ENCODE measurements at regions of chr4 and their contacts with region 1.

Region 1: DNA sequence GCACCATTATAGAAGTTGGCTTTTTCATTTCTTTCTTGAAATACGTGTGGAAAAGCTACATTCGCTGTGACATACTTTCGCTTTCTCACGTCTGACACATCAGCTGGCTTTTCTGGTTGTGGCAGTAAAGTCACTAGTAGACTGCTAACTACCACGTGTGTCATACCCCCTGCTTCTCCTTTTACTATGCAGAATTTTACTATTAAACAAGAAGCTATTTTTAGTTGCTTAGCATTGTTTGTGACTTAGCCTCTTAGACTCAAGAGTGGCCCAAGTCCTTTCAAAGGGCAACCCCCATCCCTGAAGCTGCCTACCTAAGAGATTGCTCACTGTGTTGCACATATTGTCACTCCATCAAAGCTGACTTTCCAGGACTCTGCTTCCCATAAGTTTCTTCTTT is 2.1 kb upstream of the IL2 start:
- DNase-seq: peak in 6 of 9 donors; percentile 19 to 41 (median 34)
- ATAC-seq: peak; percentile 76
- H3K4me3 ChIP-seq: peak overlapping the region; percentile 33
- H3K4me3 Mint-ChIP-seq: peak overlapping the region; percentile 74 to 91 (median 86)
- H3K27ac ChIP-seq: no peak overlapping the region
- H3K27ac Mint-ChIP-seq: peak overlapping the region; percentile 66 to 86 (median 77)
- H3K4me1 ChIP-seq: peaks cover 25 to 46% of the 10 kb centered on the region in 2 donors
- H3K4me1 Mint-ChIP-seq: peaks cover 20 to 55% (median 50%) of the 10 kb centered on the region in 7 donors
- H3K27me3 ChIP-seq: no peaks in the 10 kb centered on the region
- H3K27me3 Mint-ChIP-seq: no peaks in the 10 kb centered on the region

Region 2: GRCh38 chr4:122151982-122152710 is 306.5 kb before region 1 on chr4 and contains the start of gene BLTP1:
- CTCF ChIA-PET with region 1: no interaction called
- POLR2A ChIA-PET with region 1: interaction called, 3 read pairs
- intact Hi-C with region 1: loop called in 1 of 2 experiments (anchors 5 kb)
- DNase-seq: peak; percentile 81 to 92 (median 87)
- ATAC-seq: peak; percentile 95
- H3K4me3 ChIP-seq: peak within 1 kb of the TSS; percentile 96
- H3K4me3 Mint-ChIP-seq: peak within 1 kb of the TSS; percentile 79 to 98 (median 98)
- H3K27ac ChIP-seq: peak within 1 kb of the TSS; percentile 85
- H3K27ac Mint-ChIP-seq: peak within 1 kb of the TSS; percentile 90 to 100 (median 97)
- H3K4me1 ChIP-seq: peaks cover 22 to 28% of the 10 kb centered on the region in 2 donors
- H3K4me1 Mint-ChIP-seq: peaks cover 41 to 84% (median 72%) of the 10 kb centered on the region in 7 donors
- H3K27me3 ChIP-seq: no peaks in the 10 kb centered on the region
- H3K27me3 Mint-ChIP-seq: no peaks in the 10 kb centered on the region
- total RNA-seq, gene BLTP1: 45.9 to 86.6 (median 72.8) TPM

Region 3: DNA sequence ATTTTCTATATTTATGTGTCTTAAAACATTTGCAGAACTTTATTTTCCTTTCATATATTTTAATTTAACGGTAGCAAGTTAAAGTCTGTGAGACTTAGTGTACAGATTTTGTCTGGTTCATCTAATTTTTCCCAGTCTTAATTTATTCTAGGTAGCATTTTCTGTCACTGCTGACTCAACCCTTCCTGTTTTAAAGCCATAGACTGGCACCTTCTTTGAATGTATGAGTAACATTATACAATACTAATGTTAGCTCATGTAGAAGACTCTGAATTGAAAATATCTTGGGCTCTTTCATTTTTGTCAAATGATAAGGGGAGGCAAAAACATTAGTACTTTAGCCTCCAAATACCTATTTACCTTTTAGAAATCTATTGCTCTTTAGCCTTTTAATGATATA is 262.9 kb before region 1 on chr4:
- CTCF ChIA-PET with region 1: no interaction called
- POLR2A ChIA-PET with region 1: no interaction called
- intact Hi-C with region 1: no loop called
- DNase-seq: no peak
- ATAC-seq: no peak
- H3K4me3 ChIP-seq: no peak overlapping the region
- H3K4me3 Mint-ChIP-seq: no peak overlapping the region
- H3K27ac ChIP-seq: no peak overlapping the region
- H3K27ac Mint-ChIP-seq: no peak overlapping the region
- H3K4me1 ChIP-seq: no peaks in the 10 kb centered on the region
- H3K4me1 Mint-ChIP-seq: peaks cover 0 to 2% (median 0%) of the 10 kb centered on the region in 7 donors
- H3K27me3 ChIP-seq: no peaks in the 10 kb centered on the region
- H3K27me3 Mint-ChIP-seq: no peaks in the 10 kb centered on the region

Region 4: GRCh38 chr4:122434285-122434684 is 24.3 kb before region 1 on chr4:
- CTCF ChIA-PET with region 1: no interaction called
- POLR2A ChIA-PET with region 1: no interaction called
- intact Hi-C with region 1: loop called in 1 of 2 experiments (anchors 1 kb)
- DNase-seq: peak in 5 of 9 donors; percentile 34 to 55 (median 48)
- ATAC-seq: peak; percentile 63
- H3K4me3 ChIP-seq: no peak overlapping the region
- H3K4me3 Mint-ChIP-seq: peak overlapping the region in 8 of 10 donors; percentile 13 to 75 (median 56)
- H3K27ac ChIP-seq: no peak overlapping the region
- H3K27ac Mint-ChIP-seq: peak overlapping the region in 2 of 9 donors; percentile 6 to 10
- H3K4me1 ChIP-seq: peaks cover 0 to 10% of the 10 kb centered on the region in 2 donors
- H3K4me1 Mint-ChIP-seq: peaks cover 12 to 44% (median 32%) of the 10 kb centered on the region in 7 donors
- H3K27me3 ChIP-seq: no peaks in the 10 kb centered on the region
- H3K27me3 Mint-ChIP-seq: no peaks in the 10 kb centered on the region

Region 5: DNA sequence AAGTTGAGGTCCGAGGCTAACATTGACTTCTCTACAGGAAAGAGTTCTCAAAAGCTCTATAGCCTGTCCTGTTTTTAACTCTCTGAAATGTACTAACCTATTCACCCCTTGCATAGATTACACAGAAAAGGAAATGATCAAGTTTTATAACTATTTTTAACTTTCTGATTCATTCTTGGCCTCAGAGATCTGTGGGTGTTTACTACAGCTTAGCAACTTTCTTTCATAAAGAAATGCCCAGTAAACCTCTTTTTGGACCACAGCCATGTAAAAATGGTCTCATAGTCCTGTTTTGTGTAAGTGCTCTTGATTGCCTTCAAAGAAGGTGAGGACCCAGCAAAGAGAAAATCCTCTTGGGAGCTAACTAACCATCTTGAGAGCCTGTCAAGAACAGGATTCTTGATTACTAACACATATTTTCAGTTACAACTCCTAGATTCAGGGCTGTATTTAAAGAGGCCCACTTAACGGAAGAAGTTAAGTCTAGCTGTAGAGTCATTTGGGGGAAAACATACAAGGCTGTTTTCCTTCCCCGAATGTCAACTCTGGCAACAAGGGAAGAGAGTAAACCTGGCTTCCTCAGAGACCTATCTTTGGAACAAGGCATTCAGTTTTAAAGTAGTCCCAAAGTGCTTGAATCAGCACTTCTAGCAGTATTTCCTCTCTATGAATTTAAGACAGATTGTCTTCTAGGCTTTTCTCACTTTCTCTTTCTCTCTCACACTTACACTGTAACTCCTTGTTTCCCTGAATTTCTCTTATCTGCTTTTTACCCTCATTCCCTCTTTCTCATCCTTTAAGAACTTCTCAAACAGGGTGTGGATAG is 84.0 kb after region 1 on chr4:
- CTCF ChIA-PET with region 1: no interaction called
- POLR2A ChIA-PET with region 1: no interaction called
- intact Hi-C with region 1: loop called in 1 of 2 experiments (anchors 1 kb)
- DNase-seq: no peak
- ATAC-seq: no peak
- H3K4me3 ChIP-seq: no peak overlapping the region
- H3K4me3 Mint-ChIP-seq: peak overlapping the region in 1 of 10 donors; percentile 67
- H3K27ac ChIP-seq: no peak overlapping the region
- H3K27ac Mint-ChIP-seq: peak overlapping the region in 5 of 9 donors; percentile 4 to 92 (median 64)
- H3K4me1 ChIP-seq: peaks cover 8 to 35% of the 10 kb centered on the region in 2 donors
- H3K4me1 Mint-ChIP-seq: peaks cover 0 to 64% (median 16%) of the 10 kb centered on the region in 7 donors
- H3K27me3 ChIP-seq: no peaks in the 10 kb centered on the region
- H3K27me3 Mint-ChIP-seq: no peaks in the 10 kb centered on the region

Region 6: DNA sequence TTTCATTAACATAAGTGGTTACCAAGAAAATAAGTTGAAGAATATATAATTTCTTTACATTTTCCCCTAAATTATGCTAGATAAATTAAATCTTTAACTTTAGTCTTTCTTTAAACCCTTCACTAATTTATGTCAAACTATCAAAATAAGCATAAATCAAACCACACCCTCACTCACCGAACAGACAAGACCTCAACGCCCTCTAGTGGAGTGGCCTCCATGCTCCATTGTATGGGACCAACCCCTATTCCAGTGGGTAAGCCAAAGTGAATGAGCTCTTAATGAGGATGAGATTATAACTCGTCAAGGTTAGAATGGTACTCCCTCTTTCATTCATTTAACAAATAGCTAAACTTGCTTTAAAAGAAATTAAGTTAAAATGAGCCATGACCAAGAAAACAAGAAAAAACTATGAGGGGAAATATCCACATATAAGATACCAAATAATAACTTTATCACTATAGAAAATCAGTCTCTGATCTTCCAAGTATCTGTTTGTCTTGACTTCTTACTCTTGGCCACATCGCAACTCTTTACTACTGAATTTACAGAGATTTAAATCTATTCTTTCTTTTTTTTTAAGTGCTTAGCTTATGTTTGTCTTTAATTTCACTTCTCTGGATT is 258.3 kb after region 1 on chr4:
- CTCF ChIA-PET with region 1: no interaction called
- POLR2A ChIA-PET with region 1: no interaction called
- intact Hi-C with region 1: loop called in 1 of 2 experiments (anchors 10 kb)
- DNase-seq: peak; percentile 20 to 70 (median 63)
- ATAC-seq: peak; percentile 96
- H3K4me3 ChIP-seq: no peak overlapping the region
- H3K4me3 Mint-ChIP-seq: no peak overlapping the region
- H3K27ac ChIP-seq: no peak overlapping the region
- H3K27ac Mint-ChIP-seq: peak overlapping the region in 1 of 9 donors; percentile 46
- H3K4me1 ChIP-seq: peaks cover 0 to 5% of the 10 kb centered on the region in 2 donors
- H3K4me1 Mint-ChIP-seq: peaks cover 0 to 37% (median 12%) of the 10 kb centered on the region in 7 donors
- H3K27me3 ChIP-seq: no peaks in the 10 kb centered on the region
- H3K27me3 Mint-ChIP-seq: peaks cover 0 to 2% (median 0%) of the 10 kb centered on the region in 5 donors

Region 7: DNA sequence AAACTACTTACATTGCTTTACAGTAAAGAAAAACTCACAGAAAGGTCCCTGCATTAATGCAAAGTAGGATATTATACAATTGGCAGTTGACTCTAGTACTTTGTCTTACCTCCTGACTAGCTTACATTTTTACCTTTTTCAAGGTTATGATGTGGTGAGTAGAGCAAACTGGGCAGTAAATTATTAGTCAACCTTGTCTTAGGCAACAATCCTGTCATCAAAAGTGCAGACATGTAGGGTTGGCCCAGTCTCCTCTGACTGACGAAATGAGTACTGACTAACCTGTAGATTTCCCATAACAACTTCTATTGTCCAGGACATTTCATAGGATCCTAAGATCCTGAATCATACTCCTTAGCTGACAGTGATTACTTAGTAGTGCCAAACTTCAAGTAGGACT is 605.8 kb after region 1 on chr4:
- CTCF ChIA-PET with region 1: no interaction called
- POLR2A ChIA-PET with region 1: no interaction called
- intact Hi-C with region 1: no loop called
- DNase-seq: no peak
- ATAC-seq: no peak
- H3K4me3 ChIP-seq: no peak overlapping the region
- H3K4me3 Mint-ChIP-seq: no peak overlapping the region
- H3K27ac ChIP-seq: no peak overlapping the region
- H3K27ac Mint-ChIP-seq: no peak overlapping the region
- H3K4me1 ChIP-seq: no peaks in the 10 kb centered on the region
- H3K4me1 Mint-ChIP-seq: no peaks in the 10 kb centered on the region
- H3K27me3 ChIP-seq: no peaks in the 10 kb centered on the region
- H3K27me3 Mint-ChIP-seq: no peaks in the 10 kb centered on the region

Measured in naive thymus-derived CD4-positive, alpha-beta T cell (primary cell).